A549 (cell line): ENCODE measurements at regions of chr1 and their contacts with region 1.

Region 1: GRCh38 chr1:50978144-50978851 is 8.3 kb downstream of the CDKN2C start:
- DNase-seq: peak in 1 of 2 experiments; percentile 84
- ATAC-seq: peak; percentile 70 to 76
- H3K4me3 ChIP-seq: peak overlapping the region; percentile 71
- H3K27ac ChIP-seq: peak overlapping the region; percentile 99 to 100
- H3K4me1 ChIP-seq: peaks cover 37% of the 10 kb centered on the region; the same call in 2 of the 3 replicates
- CTCF ChIP-seq: no peak
- EP300 ChIP-seq: no peak
- POLR2A ChIP-seq: peak; percentile 39; the same call in 1 of the 2 replicates
- RAD21 ChIP-seq: no peak

Region 2: GRCh38 chr1:50968158-50968820 is 10.0 kb before region 1 on chr1:
- CTCF ChIA-PET with region 1: interaction called, 8 read pairs
- POLR2A ChIA-PET with region 1: interaction called, 29 read pairs
- DNase-seq: peak; percentile 57 to 91
- ATAC-seq: peak; percentile 79 to 88
- H3K4me3 ChIP-seq: peak overlapping the region; percentile 90
- H3K27ac ChIP-seq: peak overlapping the region; percentile 99
- H3K4me1 ChIP-seq: peaks cover 8% of the 10 kb centered on the region; the same call in 2 of the 3 replicates
- CTCF ChIP-seq: no peak; the same call in 2 of the 3 replicates
- EP300 ChIP-seq: no peak
- POLR2A ChIP-seq: peak; percentile 42
- RAD21 ChIP-seq: 0 out of 5 replicates have a peak, but pooled peaks of 1 of the 2 experiments have one; percentile 26

Region 3: DNA sequence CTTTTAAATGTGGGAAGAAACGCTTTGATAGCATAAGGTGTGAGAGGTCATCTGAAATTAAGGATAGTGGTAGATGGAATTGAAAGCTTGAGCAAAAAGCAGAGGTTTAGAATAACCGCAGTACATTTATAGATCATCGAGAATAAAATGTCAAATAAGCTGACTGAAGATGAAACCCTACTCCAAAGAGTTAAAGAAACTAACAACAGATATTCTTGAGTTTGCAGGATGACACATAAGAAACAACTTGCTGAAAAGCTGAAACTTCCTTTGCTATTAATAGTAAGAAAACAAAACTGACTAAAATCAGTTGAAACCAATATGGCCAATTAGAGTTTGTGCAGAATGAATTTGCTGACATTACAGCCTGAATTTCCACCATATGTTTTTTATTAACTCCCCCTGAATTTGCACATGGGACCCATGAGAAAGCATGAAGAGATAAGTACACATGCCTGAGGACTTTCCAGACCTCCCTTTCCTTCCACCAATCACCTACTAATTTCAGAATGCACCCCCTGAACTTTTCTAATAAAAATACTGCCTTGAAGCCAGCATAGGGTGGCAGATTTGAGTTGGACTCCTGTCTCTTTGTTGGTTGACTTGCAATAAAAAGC is 122.1 kb after region 1 on chr1:
- CTCF ChIA-PET with region 1: no interaction called
- POLR2A ChIA-PET with region 1: no interaction called
- DNase-seq: no peak
- ATAC-seq: no peak
- H3K4me3 ChIP-seq: no peak overlapping the region
- H3K27ac ChIP-seq: no peak overlapping the region
- H3K4me1 ChIP-seq: no peaks in the 10 kb centered on the region
- CTCF ChIP-seq: no peak
- EP300 ChIP-seq: no peak
- POLR2A ChIP-seq: no peak
- RAD21 ChIP-seq: no peak